ENCODE measurements at regions of chr6 and their contacts with region 1.

Region 1: DNA sequence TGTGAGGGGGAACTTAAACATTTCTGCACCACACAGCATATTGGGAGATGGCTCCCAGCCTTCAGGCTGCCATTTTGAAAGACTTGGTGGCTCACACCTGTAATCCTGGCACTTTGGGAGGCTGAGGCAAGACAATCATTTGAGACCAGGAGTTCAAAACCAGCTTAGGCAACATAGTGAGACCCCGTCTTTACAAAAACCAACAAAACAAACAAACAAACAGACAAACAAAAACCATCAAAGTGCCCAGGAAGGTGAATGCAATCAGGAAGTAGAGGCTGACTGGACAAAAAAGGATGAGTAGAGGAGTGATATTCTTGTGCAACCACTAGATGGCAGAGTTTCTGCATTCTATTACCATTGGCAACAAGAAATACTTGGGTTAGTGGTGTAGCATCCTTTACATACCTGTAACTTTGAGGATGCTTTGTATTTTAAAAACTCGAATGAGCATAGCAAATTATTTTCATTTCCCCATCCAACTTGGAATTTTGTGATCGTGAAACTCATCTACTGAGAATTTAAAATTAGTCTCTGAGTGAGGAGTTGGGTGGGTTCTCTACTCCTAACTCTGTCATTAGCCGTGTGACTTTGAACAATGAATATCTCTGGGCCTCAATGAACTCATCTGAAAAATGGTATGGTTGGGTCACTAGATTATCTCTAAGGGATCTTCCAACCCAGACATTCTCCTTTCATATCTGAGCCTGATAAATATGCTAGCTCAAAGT is 84.4 kb downstream of the CRYBG1 start:
- DNase-seq: no peak
- ATAC-seq: peak; percentile 68

Region 2: DNA sequence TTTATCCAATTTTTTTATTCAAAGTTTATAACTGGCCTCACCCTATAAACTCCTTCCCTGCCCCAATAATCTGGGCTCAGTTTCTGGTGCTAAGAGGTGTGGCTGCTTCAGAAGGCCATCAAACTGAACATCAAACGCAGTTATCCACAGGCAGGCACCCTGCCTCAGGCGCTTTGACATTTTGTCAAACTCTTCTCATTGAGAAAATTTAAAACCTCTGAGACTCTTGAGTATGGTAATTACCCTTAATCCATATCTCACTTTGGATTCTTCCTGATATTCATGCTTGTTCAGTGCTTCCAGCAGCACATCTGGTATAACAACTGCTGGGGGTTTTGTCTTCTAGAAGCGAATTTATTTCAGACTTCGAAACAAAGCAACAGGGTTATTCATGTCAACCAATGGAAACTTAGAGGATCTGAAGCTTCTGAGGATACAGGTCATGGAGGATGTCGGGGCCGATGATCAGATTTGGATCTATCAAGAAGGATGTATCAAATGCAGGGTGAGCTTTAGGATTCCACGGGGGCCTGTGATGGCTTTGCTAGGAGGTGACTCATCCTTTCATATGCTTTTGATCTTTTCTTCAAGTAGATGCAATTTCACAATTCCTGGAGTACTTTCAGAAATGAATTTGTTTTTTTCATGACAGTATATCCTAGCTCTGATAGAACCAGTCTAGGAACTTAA is 116.2 kb after region 1 on chr6:
- intact Hi-C with region 1: loop called (anchors 2 kb)
- DNase-seq: no peak
- ATAC-seq: no peak

Region 3: GRCh38 chr6:106979427-106979884 is 534.5 kb after region 1 on chr6:
- intact Hi-C with region 1: loop called (anchors 10 kb)
- DNase-seq: peak; percentile 89
- ATAC-seq: peak; percentile 81